CD8-positive, alpha-beta memory T cell (primary cell): ENCODE measurements at regions of chr15 and their contacts with region 1.

Region 1: DNA sequence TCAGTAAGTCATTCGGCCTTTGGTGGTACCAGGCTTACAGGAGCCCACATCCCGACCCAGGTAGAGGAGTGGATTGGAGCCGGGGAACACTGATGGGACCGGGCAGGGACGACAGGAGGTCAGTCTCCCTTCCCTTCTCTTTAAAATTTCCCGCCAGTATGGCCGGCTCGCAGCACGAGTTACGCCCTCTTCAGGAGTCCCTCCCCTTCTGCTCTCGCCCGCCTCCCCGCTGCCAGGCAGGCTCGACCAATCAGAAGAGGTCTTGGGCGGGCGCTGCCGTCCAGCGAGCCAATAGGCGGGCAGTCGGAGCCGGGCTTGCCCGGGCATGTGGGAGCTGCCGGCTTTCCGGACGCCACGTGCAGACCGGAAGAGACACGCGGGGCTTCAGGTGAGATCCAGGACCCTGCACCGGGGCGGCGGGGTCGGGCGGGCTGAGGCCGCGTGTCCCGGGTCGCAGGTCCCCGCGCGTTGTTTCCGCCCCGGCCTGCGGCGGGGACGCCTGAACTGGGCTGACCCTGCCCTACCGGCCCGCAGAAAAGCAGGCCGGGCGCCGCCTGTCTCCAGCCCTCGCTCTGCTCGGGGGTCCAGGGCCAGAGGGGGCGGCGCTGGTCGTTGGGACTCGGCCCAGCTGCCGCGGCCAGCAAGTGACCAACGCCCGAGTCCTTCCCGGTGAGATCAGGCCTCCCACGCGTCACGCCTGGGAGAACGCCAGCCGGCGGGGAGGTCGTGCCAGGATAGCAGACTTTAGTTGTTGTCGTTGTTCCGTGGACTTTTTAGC is at the start of gene AEN:
- DNase-seq: peak; percentile 91 to 96 (median 95)
- H3K4me3 ChIP-seq: peak within 1 kb of the TSS; percentile 60
- H3K4me3 Mint-ChIP-seq: peak within 1 kb of the TSS; percentile 83 to 95 (median 89)
- H3K27ac ChIP-seq: peak within 1 kb of the TSS; percentile 71
- H3K27ac Mint-ChIP-seq: peak within 1 kb of the TSS; percentile 86 to 98 (median 94)
- H3K4me1 ChIP-seq: peaks cover 40% of the 10 kb centered on the region
- H3K4me1 Mint-ChIP-seq: peaks cover 46 to 55% (median 49%) of the 10 kb centered on the region in 3 donors
- H3K27me3 ChIP-seq: no peaks in the 10 kb centered on the region
- H3K27me3 Mint-ChIP-seq: peaks cover 5 to 13% of the 10 kb centered on the region in 2 donors
- total RNA-seq, gene AEN: 109 TPM

Region 2: GRCh38 chr15:88574655-88575054 is 46.5 kb before region 1 on chr15:
- CTCF ChIA-PET with region 1: no interaction called
- POLR2A ChIA-PET with region 1: no interaction called
- DNase-seq: no peak
- H3K4me3 ChIP-seq: no peak overlapping the region
- H3K4me3 Mint-ChIP-seq: no peak overlapping the region
- H3K27ac ChIP-seq: no peak overlapping the region
- H3K27ac Mint-ChIP-seq: no peak overlapping the region
- H3K4me1 ChIP-seq: no peaks in the 10 kb centered on the region
- H3K4me1 Mint-ChIP-seq: no peaks in the 10 kb centered on the region
- H3K27me3 ChIP-seq: peaks cover 3% of the 10 kb centered on the region
- H3K27me3 Mint-ChIP-seq: peaks cover 6 to 10% of the 10 kb centered on the region in 2 donors

Region 3: DNA sequence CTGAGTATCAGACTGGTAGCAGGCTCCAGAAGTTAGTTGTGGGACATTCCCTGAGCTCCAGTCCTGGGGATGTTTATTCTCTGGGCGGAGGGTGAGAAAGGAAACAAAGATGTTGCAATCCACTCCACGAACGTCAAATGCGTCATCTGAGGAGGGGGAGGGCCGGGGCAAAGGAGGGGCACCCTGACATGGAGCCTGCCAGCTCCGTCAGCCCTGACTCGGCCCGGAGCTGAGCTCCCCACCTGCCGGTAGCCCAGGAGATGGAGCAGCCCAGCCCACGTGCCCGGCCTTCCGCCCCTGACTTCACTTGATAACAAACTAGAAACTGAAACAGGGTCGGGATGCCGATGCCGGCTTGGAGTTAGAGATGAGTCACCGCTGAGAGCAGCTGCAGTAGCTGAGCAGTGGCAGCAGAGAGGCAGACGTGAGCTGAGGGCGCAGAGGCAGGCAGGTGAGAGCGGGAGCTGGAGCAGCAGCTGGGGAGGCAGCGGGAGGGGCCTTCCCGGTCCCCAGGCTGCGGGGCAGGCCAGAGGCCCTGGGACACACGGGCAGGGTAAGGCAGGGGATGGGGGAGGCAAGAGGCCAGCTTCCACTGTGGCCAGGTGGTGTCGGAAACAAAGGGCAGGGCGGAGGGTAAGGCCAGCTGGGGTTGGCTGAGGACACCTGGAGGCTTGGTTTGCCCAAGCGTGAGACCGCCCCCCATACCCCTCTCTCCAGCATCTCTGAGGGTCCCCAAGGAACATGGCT is 17.6 kb after region 1 on chr15 and contains the start of gene ISG20:
- CTCF ChIA-PET with region 1: interaction called, 35 read pairs
- POLR2A ChIA-PET with region 1: interaction called, 20 read pairs
- DNase-seq: peak; percentile 96 to 99 (median 99)
- H3K4me3 ChIP-seq: peak within 1 kb of the TSS; percentile 80
- H3K4me3 Mint-ChIP-seq: peak within 1 kb of the TSS; percentile 86 to 97 (median 93)
- H3K27ac ChIP-seq: peak within 1 kb of the TSS; percentile 96
- H3K27ac Mint-ChIP-seq: peak within 1 kb of the TSS; percentile 91 to 100 (median 98)
- H3K4me1 ChIP-seq: peaks cover 90% of the 10 kb centered on the region
- H3K4me1 Mint-ChIP-seq: peaks cover 65 to 87% (median 87%) of the 10 kb centered on the region in 3 donors
- H3K27me3 ChIP-seq: no peaks in the 10 kb centered on the region
- H3K27me3 Mint-ChIP-seq: peaks cover 0 to 3% of the 10 kb centered on the region in 2 donors
- total RNA-seq, gene ISG20: 22.5 to 27.2 TPM

Region 4: GRCh38 chr15:88649286-88649733 is 28.1 kb after region 1 on chr15:
- CTCF ChIA-PET with region 1: interaction called, 88 read pairs
- POLR2A ChIA-PET with region 1: no interaction called
- DNase-seq: peak; percentile 36 to 83 (median 63)
- H3K4me3 ChIP-seq: peak overlapping the region; percentile 15
- H3K4me3 Mint-ChIP-seq: peak overlapping the region; percentile 9 to 83 (median 73)
- H3K27ac ChIP-seq: no peak overlapping the region
- H3K27ac Mint-ChIP-seq: peak overlapping the region; percentile 89 to 99 (median 96)
- H3K4me1 ChIP-seq: peaks cover 85% of the 10 kb centered on the region
- H3K4me1 Mint-ChIP-seq: peaks cover 75 to 93% (median 83%) of the 10 kb centered on the region in 3 donors
- H3K27me3 ChIP-seq: no peaks in the 10 kb centered on the region
- H3K27me3 Mint-ChIP-seq: no peaks in the 10 kb centered on the region

Region 5: GRCh38 chr15:88657326-88658069 is 36.3 kb after region 1 on chr15:
- CTCF ChIA-PET with region 1: interaction called, 88 read pairs
- POLR2A ChIA-PET with region 1: interaction called, 3 read pairs
- DNase-seq: no peak
- H3K4me3 ChIP-seq: no peak overlapping the region
- H3K4me3 Mint-ChIP-seq: no peak overlapping the region
- H3K27ac ChIP-seq: no peak overlapping the region
- H3K27ac Mint-ChIP-seq: peak overlapping the region; percentile 63 to 85 (median 72)
- H3K4me1 ChIP-seq: peaks cover 72% of the 10 kb centered on the region
- H3K4me1 Mint-ChIP-seq: peaks cover 38 to 77% (median 46%) of the 10 kb centered on the region in 3 donors
- H3K27me3 ChIP-seq: no peaks in the 10 kb centered on the region
- H3K27me3 Mint-ChIP-seq: no peaks in the 10 kb centered on the region

Region 6: GRCh38 chr15:88664151-88664778 is 43.1 kb after region 1 on chr15:
- CTCF ChIA-PET with region 1: interaction called, 88 read pairs
- POLR2A ChIA-PET with region 1: interaction called, 8 read pairs
- DNase-seq: peak; percentile 18 to 74 (median 48)
- H3K4me3 ChIP-seq: no peak overlapping the region
- H3K4me3 Mint-ChIP-seq: no peak overlapping the region
- H3K27ac ChIP-seq: no peak overlapping the region
- H3K27ac Mint-ChIP-seq: peak overlapping the region in 5 of 8 donors; percentile 54 to 87 (median 65)
- H3K4me1 ChIP-seq: peaks cover 26% of the 10 kb centered on the region
- H3K4me1 Mint-ChIP-seq: peaks cover 8 to 28% (median 12%) of the 10 kb centered on the region in 3 donors
- H3K27me3 ChIP-seq: no peaks in the 10 kb centered on the region
- H3K27me3 Mint-ChIP-seq: peaks cover 5 to 6% of the 10 kb centered on the region in 2 donors